Right ventricle myocardium inferior (tissue), 1 donor: ENCODE measurements at regions of chr12 and their contacts with region 1.

Region 1: GRCh38 chr12:46831335-46832129 is 5.7 kb upstream of the SLC38A4 start:
- DNase-seq: peak; percentile 81
- ATAC-seq: peak; percentile 94

Region 2: GRCh38 chr12:46675736-46676135 is 155.8 kb before region 1 on chr12:
- intact Hi-C with region 1: loop called (anchors 5 kb)
- DNase-seq: no peak
- ATAC-seq: no peak

Region 3: GRCh38 chr12:46794593-46795190 is 36.8 kb before region 1 on chr12:
- intact Hi-C with region 1: no loop called
- DNase-seq: no peak
- ATAC-seq: no peak

Region 4: GRCh38 chr12:46914336-46914735 is 82.8 kb after region 1 on chr12:
- intact Hi-C with region 1: loop called (anchors 5 kb)
- DNase-seq: no peak
- ATAC-seq: no peak